WTC11 (cell line): ENCODE measurements at regions of chr12 and their contacts with region 1.

Region 1: DNA sequence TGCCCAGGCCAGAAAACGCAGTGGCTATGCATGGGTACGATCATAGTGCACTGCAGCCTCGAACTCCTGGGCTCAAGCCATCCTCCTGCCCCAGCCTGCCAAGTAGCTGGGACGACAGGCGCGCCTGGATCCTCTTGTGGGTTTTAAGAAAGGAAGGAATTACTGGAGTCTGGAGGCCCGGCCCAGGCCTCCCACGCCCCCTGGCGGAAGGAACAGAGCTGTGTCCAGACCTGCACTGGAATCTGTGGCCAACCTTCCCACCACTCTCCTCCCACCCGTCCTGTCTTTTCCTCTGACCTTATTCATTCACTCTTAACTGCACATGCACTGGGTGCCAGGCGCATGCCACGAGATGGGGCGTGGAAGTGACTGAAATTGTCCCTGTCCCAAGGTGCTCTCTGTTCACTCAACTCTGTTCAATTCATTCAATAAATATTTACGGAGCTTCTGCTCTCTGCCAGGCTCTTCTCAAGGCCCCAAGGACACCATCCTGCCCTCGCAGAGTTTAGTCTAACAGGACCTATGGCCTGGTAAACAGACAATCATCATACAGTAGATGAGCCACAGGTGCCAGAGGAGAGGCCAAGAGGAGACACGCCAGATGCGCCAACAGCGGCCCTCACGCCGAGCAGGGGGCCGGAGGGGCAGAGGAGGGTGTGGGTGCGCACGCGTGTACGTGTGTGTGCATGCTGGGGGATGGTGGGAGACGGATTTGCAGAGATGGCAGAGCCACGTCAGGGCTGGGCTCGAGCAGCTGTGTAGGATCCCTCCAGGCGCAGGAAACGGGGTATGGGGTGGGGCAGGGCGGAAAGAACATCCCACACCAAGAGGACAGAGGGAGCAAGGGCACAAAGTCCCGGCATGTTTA is 13.7 kb upstream of the TMEM106C start:
- DNase-seq: peak; percentile 85
- ATAC-seq: peak; percentile 94
- H3K4me3 Mint-ChIP-seq: no peak overlapping the region
- H3K27ac Mint-ChIP-seq: no peak overlapping the region
- H3K4me1 Mint-ChIP-seq: peaks cover 13% of the 10 kb centered on the region
- H3K27me3 Mint-ChIP-seq: peaks cover 17% of the 10 kb centered on the region
- CTCF ChIP-seq: peak; percentile 88

Region 2: DNA sequence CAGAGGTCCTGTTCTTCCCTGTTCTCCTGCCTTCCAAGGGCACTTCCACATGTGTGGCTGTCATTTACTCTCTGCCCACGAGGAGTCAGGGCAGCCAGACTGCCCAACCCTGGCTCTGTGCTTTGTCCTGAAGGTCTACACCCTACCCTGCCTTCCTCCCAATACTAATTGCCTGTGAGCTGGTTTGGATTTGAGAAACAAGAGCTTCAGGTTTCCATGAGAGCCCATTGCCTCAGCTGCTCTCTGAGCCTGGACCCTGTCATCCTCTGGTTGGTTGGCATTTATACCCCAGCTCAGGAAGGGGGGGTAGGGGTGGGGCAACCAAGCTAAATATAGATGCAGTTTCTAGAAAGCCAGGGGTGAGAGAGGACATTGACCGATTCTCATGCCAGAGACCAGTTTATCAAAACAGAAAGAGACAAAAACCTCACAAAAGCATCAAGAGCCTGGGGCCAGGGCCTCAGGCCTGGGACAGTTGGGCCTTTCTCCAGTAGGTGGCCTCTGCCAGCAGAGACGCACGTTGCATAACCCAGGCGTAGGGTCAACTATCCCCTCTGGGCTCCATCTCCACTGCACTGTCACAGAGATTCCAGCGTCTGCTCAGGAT is 79.4 kb before region 1 on chr12:
- CTCF ChIA-PET with region 1: interaction called, 34 read pairs
- POLR2A ChIA-PET with region 1: no interaction called
- DNase-seq: peak; percentile 68
- ATAC-seq: peak; percentile 100
- H3K4me3 Mint-ChIP-seq: no peak overlapping the region
- H3K27ac Mint-ChIP-seq: no peak overlapping the region
- H3K4me1 Mint-ChIP-seq: peaks cover 8% of the 10 kb centered on the region
- H3K27me3 Mint-ChIP-seq: peaks cover 5% of the 10 kb centered on the region
- CTCF ChIP-seq: peak; percentile 24; the same call in 1 of the 2 replicates

Region 3: DNA sequence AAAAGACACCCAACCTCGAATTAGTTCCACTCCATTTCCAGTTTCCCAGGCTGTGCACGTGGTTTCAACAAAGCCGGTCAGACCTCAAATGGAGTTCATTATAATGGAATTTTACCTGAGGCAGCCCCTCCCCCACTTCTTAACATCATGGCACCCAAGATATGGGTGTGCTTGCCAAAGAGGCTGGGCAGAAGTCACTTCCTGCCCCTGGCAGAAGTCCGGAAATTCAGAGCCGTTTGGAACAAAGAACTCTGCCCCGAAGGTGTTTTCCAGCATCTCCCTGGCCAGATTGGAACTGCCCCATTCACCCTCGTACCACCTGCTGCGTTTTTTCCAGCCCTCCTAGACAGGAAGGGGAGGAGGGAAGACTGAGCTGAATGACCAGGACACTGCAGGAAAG is 53.0 kb before region 1 on chr12:
- CTCF ChIA-PET with region 1: interaction called, 16 read pairs
- POLR2A ChIA-PET with region 1: interaction called, 4 read pairs
- DNase-seq: peak; percentile 24
- ATAC-seq: peak; percentile 31
- H3K4me3 Mint-ChIP-seq: no peak overlapping the region
- H3K27ac Mint-ChIP-seq: no peak overlapping the region
- H3K4me1 Mint-ChIP-seq: peaks cover 14% of the 10 kb centered on the region
- H3K27me3 Mint-ChIP-seq: peaks cover 67% of the 10 kb centered on the region
- CTCF ChIP-seq: no peak

Region 4: GRCh38 chr12:47935184-47935583 is 14.5 kb before region 1 on chr12:
- CTCF ChIA-PET with region 1: interaction called, 13 read pairs
- POLR2A ChIA-PET with region 1: no interaction called
- DNase-seq: no peak
- ATAC-seq: no peak
- H3K4me3 Mint-ChIP-seq: no peak overlapping the region
- H3K27ac Mint-ChIP-seq: no peak overlapping the region
- H3K4me1 Mint-ChIP-seq: no peaks in the 10 kb centered on the region
- H3K27me3 Mint-ChIP-seq: peaks cover 7% of the 10 kb centered on the region; the same call in 1 of the 2 replicates
- CTCF ChIP-seq: no peak

Region 5: DNA sequence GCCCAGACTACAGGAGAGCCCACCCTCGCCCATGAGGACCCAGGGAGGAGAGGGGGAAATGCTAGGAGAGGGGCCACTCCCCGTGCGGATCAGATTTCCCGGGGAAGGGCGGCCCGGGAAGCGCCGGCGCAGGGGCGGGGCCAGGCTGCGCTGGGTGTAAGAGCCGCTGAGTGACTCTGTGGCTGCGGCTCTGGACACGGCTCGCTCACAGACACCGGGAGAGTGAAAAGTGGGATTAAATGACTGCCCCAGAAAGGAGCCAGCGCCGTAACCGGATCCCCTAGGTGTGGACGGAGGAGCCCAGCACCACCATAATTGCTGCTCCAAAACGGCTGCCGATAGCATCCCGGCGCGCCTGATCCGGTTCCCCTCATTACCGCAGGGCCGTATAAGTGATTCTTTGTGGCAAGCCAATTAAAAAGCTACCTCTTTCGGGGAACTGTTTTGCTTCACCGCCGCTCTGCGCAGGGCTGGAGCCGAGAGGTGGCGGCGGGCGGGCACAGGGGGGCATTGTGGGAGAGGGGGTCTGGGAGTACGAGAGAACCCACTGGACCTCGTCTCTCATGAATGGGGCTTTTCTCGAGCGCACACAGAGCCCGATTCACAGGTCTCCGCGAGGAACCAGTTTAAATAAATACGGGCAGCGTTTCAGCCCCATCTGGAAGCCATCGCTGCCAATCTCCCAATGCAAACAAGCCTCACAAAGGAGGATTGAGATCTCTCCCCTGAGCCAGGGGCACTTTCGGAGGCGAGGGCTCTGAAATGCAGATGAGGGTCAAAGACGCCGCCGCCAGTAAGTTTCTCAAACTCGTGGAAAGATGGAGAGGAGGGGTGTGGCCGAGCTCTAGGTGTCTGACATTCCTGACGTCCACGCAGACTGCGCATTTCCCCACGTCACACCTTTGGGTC is 52.1 kb after region 1 on chr12:
- CTCF ChIA-PET with region 1: interaction called, 10 read pairs
- POLR2A ChIA-PET with region 1: no interaction called
- DNase-seq: peak; percentile 78
- ATAC-seq: peak; percentile 57
- H3K4me3 Mint-ChIP-seq: peak overlapping the region; percentile 81
- H3K27ac Mint-ChIP-seq: 0 out of 2 replicates have a peak overlapping the region, but pooled peaks have one; percentile 49
- H3K4me1 Mint-ChIP-seq: peaks cover 67% of the 10 kb centered on the region
- H3K27me3 Mint-ChIP-seq: peaks cover 100% of the 10 kb centered on the region
- CTCF ChIP-seq: no peak